IMR-90 (cell line): ENCODE measurements at regions of chr5 and their contacts with region 1.

Region 1: GRCh38 chr5:17216176-17216973 is 1.1 kb upstream of the BASP1 start:
- DNase-seq: peak; percentile 76
- ATAC-seq: peak; percentile 24
- H3K4me3 ChIP-seq: peak overlapping the region; percentile 49
- H3K27ac ChIP-seq: peak overlapping the region; percentile 27
- H3K4me1 ChIP-seq: peaks cover 3% of the 10 kb centered on the region
- H3K27me3 ChIP-seq: no peaks in the 10 kb centered on the region; the same call in 1 of the 2 replicates
- CTCF ChIP-seq: peak; percentile 88
- POLR2A ChIP-seq: no peak
- RAD21 ChIP-seq: peak; percentile 95

Region 2: GRCh38 chr5:17282283-17283120 is 66.1 kb after region 1 on chr5:
- CTCF ChIA-PET with region 1: no interaction called
- POLR2A ChIA-PET with region 1: no interaction called
- dilution Hi-C with region 1: no loop called
- in situ Hi-C with region 1: no loop called
- intact Hi-C with region 1: loop called (anchors 2 kb)
- DNase-seq: no peak
- ATAC-seq: no peak
- H3K4me3 ChIP-seq: no peak overlapping the region
- H3K27ac ChIP-seq: no peak overlapping the region
- H3K4me1 ChIP-seq: no peaks in the 10 kb centered on the region
- H3K27me3 ChIP-seq: no peaks in the 10 kb centered on the region
- CTCF ChIP-seq: no peak
- POLR2A ChIP-seq: no peak
- RAD21 ChIP-seq: no peak

Region 3: DNA sequence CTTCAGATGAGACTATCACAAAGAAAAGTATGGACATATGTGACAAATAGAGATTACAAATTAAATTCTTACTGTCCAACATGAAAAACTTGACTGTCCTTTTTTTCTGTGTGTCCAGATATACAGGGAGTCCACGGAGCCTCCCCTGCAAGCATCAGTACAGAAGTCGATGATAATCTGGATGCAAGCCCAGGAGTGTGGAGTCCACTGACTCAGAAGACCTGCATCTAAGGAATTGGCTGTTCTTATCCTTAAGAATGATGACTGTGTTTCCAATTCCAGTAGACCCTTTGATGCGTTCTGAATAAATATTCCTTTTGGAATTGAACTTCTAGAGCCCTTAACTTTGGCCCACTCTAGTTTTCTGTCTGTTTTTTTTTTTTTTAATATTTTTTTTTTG is 225.0 kb after region 1 on chr5:
- CTCF ChIA-PET with region 1: interaction called, 4 read pairs
- POLR2A ChIA-PET with region 1: no interaction called
- dilution Hi-C with region 1: no loop called
- in situ Hi-C with region 1: no loop called
- intact Hi-C with region 1: loop called (anchors 5 kb)
- DNase-seq: peak; percentile 95
- ATAC-seq: peak; percentile 91
- H3K4me3 ChIP-seq: no peak overlapping the region
- H3K27ac ChIP-seq: no peak overlapping the region
- H3K4me1 ChIP-seq: peaks cover 4% of the 10 kb centered on the region; the same call in 1 of the 2 replicates
- H3K27me3 ChIP-seq: no peaks in the 10 kb centered on the region
- CTCF ChIP-seq: no peak
- POLR2A ChIP-seq: no peak
- RAD21 ChIP-seq: no peak

Region 4: GRCh38 chr5:17896605-17897004 is 680.2 kb after region 1 on chr5:
- CTCF ChIA-PET with region 1: no interaction called
- POLR2A ChIA-PET with region 1: no interaction called
- dilution Hi-C with region 1: no loop called
- in situ Hi-C with region 1: no loop called
- intact Hi-C with region 1: loop called (anchors 2 kb)
- DNase-seq: peak; percentile 35
- ATAC-seq: peak; percentile 73
- H3K4me3 ChIP-seq: no peak overlapping the region
- H3K27ac ChIP-seq: peak overlapping the region; percentile 89; the same call in 1 of the 2 replicates
- H3K4me1 ChIP-seq: peaks cover 2% of the 10 kb centered on the region; the same call in 1 of the 2 replicates
- H3K27me3 ChIP-seq: no peaks in the 10 kb centered on the region
- CTCF ChIP-seq: no peak
- POLR2A ChIP-seq: no peak
- RAD21 ChIP-seq: no peak

Region 5: DNA sequence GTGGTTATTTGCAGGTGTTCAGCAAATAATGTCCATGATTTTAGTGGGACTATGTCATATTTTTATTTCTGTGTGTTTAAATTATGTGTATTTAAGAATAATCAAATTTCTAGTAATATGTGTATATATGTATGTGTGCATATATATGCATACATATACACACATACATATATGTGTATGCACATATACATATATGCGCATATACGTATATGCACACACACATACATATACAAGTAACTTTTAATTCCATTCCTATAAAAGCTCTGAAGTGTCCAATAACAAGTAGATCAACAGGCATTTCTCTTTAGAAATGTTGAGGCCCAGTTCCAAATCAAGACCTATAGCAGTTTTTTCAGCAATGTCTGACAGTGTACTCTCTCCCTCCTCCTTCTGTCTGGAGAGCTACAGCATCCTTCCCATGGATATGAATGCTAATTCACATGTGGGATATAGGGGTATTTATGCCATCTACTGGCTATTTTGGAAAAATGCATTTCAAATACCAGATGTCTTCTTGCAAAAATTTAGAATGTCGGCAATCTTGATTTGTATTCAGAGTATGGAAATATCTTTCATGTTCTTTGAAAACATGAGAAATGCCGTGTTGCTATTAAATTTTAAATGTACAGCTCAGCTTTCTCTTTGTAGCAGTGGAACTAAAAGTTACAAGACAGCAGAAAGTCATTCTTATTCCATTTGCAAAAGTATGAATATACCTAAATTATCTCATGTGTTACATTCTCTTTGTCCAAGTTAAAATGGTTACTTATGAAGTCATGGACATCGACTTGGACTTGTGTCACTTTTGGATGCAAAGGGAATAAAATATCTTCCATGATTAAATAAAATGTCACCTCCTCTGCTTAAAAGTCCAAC is 1065.5 kb after region 1 on chr5:
- CTCF ChIA-PET with region 1: interaction called, 16 read pairs
- POLR2A ChIA-PET with region 1: no interaction called
- dilution Hi-C with region 1: no loop called
- in situ Hi-C with region 1: loop called (anchors 5 kb)
- intact Hi-C with region 1: loop called (anchors 1 kb)
- DNase-seq: peak; percentile 62
- ATAC-seq: peak; percentile 85
- H3K4me3 ChIP-seq: no peak overlapping the region
- H3K27ac ChIP-seq: no peak overlapping the region
- H3K4me1 ChIP-seq: no peaks in the 10 kb centered on the region
- H3K27me3 ChIP-seq: no peaks in the 10 kb centered on the region
- CTCF ChIP-seq: peak; percentile 63
- POLR2A ChIP-seq: no peak
- RAD21 ChIP-seq: peak; percentile 68